HepG2 (cell line): ENCODE measurements at regions of chr15 and their contacts with region 1.

Region 1: DNA sequence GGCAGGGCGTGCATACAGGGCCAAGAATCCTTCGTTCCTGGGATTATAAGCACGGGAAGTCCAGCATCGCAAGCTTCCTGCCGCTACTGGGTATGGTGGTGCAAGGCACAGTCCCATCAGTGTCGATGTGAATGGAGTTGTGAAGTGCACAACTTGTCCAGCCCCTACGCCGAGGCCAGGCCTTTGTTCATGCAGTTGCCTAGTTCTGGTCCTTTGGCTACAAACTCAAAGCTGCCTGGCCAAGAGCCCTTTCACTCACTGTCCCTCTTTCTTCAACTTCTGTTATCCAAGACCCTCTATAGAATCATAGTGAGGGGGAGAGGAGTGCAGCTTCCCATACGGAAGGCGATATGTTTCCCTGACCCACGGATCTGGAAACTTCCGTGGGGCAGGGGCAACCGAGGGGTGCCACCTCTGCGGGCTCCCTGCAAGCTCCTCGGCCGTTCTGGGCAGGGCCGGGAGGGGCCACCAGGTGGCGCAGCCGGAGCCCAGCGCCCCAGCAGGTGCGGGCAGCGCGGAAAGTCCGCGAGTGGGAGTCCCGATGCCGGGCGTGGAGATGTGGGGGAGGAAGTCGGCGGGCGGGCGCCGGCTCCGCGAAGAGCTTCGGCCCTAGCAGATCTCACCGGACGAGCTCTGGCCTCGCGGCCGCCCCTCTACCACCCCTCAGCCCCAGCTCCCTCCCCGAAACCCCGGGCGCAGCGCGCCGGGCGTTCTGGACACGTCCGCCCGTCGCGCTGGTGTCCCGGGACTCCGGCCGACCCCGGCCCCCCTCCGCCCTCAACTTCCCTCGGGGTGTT is 693 bp downstream of the RASGRP1 start:
- DNase-seq: no peak
- ATAC-seq: peak; percentile 94
- H3K4me3 ChIP-seq: peak overlapping the region; percentile 47 to 69 (median 59)
- H3K27ac ChIP-seq: no peak overlapping the region
- H3K4me1 ChIP-seq: no peaks in the 10 kb centered on the region
- H3K27me3 ChIP-seq: peaks cover 3 to 32% of the 10 kb centered on the region in 2 experiments; a peak in 4 of 5 replicates
- CTCF ChIP-seq: peak; percentile 81
- EP300 ChIP-seq: no peak
- POLR2A ChIP-seq: no peak
- RAD21 ChIP-seq: peak; percentile 57

Region 2: DNA sequence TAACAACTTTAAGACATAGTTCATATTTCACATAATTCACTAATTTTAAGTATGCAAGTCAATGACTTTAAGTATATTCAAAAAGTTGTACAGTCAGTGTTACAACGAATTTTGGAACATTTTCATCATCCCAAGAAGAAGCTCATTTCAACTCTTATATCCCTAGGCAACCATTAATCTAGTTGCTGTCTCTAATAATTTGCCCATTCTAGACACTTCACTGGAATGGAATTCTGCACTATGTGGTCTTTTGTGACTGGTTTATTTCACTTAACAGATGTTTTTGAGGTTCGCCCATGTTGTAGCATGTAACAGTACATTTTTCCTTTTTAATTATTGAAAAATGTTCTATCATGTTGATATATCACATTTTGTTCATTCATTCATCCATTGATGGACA is 415.4 kb before region 1 on chr15:
- CTCF ChIA-PET with region 1: no interaction called
- POLR2A ChIA-PET with region 1: no interaction called
- in situ Hi-C with region 1: no loop called
- intact Hi-C with region 1: no loop called
- DNase-seq: no peak
- ATAC-seq: no peak
- H3K4me3 ChIP-seq: no peak overlapping the region
- H3K27ac ChIP-seq: no peak overlapping the region
- H3K4me1 ChIP-seq: no peaks in the 10 kb centered on the region
- H3K27me3 ChIP-seq: no peaks in the 10 kb centered on the region
- CTCF ChIP-seq: no peak
- EP300 ChIP-seq: no peak
- POLR2A ChIP-seq: no peak
- RAD21 ChIP-seq: no peak

Region 3: DNA sequence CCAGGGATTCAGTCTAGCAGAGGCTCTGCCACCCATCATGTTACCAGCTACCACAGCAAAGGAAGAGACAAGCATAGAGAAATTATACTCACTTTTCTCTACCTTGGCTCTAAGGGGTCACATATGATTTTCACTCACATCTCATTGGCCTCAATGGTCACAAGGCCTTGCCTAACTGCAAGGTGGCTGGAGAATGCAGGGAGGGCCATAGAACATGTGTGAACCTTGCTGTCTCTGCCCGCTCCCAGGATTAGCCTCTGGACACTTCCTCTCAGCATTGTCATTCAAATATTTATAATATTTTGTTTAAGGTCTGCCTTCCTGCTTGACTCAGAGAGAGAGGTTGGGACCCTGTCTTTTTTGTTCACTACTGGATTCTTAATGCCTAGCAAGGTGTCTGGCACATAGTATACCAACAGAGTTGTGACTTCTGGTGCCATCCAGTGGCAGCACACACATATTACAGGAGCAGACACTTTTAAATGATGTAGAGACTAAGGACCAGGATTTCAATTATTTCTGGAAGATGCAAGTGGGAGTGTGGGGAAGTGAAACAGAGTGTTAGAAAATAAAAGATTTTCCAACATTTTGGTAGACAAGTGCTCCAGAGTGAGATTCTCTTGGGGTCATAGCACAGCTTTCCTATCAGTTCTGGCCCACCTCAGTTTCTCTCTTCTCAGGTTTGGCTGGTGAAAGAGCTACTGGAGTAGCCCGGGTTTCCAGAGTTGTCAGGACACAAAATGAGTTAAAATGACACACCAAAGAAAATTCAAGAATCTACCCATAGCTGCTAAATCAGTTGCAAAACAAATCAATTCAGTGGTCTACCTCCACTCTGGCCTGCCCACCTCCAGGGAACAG is 119.7 kb after region 1 on chr15:
- CTCF ChIA-PET with region 1: interaction called, 4 read pairs
- POLR2A ChIA-PET with region 1: no interaction called
- in situ Hi-C with region 1: no loop called
- intact Hi-C with region 1: loop called (anchors 1 kb)
- DNase-seq: peak; percentile 27
- ATAC-seq: peak; percentile 84
- H3K4me3 ChIP-seq: no peak overlapping the region
- H3K27ac ChIP-seq: no peak overlapping the region
- H3K4me1 ChIP-seq: no peaks in the 10 kb centered on the region
- H3K27me3 ChIP-seq: no peaks in the 10 kb centered on the region; a peak in 1 of 5 replicates
- CTCF ChIP-seq: peak; percentile 75
- EP300 ChIP-seq: no peak
- POLR2A ChIP-seq: no peak
- RAD21 ChIP-seq: no peak